OCI-LY7 (cell line): ENCODE measurements at regions of chr3 and their contacts with region 1.

Region 1: DNA sequence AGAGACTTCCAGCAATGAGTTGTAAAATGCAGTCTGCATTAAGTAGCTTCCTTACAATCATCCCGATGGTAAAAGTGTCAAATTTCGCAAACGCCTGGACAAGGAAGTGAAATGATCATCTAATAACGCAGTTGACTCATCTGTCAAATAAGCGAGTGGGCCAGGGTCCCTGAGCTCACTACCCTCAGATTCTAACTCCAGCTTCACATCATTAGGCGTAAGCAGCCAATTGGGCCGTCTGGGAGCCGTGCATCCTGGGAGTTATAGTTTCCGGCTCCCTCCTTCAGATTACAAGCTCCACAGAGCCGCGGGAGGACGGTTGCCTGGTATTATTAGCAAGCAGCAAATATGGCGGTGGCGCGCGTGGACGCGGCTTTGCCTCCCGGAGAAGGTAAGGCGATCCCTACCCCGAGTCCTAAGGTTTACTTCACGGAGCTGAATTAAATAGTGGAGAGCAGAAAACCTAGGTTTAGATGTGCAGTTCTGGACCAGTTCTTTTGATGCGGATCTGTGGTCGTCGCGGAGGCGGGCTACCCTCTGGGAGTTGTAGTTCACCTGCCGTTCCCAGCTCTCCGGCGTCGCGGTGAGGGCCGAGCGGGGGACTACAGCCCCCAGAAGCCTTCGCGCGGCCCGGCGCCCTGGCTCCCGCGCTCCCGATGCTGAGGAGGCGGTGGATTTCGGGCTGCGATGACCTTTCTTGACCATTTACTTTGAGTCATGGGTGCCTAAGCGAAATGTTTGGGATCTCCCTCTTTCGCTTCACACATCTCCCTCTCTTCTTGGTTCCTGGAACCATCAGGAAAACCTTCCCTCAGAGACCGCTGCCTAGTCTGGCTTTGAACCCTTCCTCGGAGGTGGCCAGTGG is at the start of gene CEP97:
- DNase-seq: peak; percentile 96
- H3K4me3 ChIP-seq: peak within 1 kb of the TSS; percentile 87
- H3K27ac ChIP-seq: peak within 1 kb of the TSS; percentile 83
- H3K4me1 ChIP-seq: peaks cover 47% of the 10 kb centered on the region
- CTCF ChIP-seq: no peak
- total RNA-seq, gene CEP97: 25.3 and 27.3 TPM in 2 replicates

Region 2: GRCh38 chr3:101625879-101626278 is 98.7 kb before region 1 on chr3:
- CTCF ChIA-PET with region 1: no interaction called
- POLR2A ChIA-PET with region 1: no interaction called
- intact Hi-C with region 1: no loop called
- DNase-seq: no peak
- H3K4me3 ChIP-seq: no peak overlapping the region
- H3K27ac ChIP-seq: no peak overlapping the region
- H3K4me1 ChIP-seq: no peaks in the 10 kb centered on the region
- CTCF ChIP-seq: no peak

Region 3: DNA sequence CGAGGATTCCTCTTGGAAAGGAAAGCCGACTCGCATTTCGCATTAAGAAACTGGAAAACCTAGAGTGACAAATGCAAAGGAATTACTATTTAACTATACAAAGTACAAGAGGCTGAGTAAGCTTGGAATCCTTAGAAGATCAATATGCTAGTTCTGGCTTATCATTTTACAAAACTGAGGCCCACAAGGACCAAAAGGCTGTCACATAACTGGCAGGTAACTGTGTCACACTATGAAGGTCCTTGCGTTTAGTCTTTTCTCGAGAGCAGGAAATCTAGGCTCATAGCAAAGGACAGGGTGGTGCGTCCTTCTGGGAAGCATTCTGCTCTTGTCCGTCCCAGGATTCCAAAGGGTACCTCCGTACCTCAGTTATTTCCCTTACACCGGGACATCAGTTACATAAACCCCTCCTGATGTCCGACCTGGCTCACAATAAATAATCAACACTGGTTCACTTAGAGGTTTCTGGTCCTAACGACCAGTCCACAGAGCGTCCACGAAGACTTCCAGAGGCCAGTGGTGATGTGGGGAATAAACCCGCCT is 38.6 kb before region 1 on chr3:
- CTCF ChIA-PET with region 1: no interaction called
- POLR2A ChIA-PET with region 1: interaction called, 12 read pairs
- intact Hi-C with region 1: loop called (anchors 5 kb)
- DNase-seq: no peak
- H3K4me3 ChIP-seq: peak overlapping the region; percentile 97
- H3K27ac ChIP-seq: peak overlapping the region; percentile 63
- H3K4me1 ChIP-seq: peaks cover 34% of the 10 kb centered on the region
- CTCF ChIP-seq: no peak

Region 4: GRCh38 chr3:101701696-101702634 is 22.6 kb before region 1 on chr3:
- CTCF ChIA-PET with region 1: interaction called, 4 read pairs
- POLR2A ChIA-PET with region 1: interaction called, 67 read pairs
- intact Hi-C with region 1: loop called (anchors 1 kb)
- DNase-seq: peak; percentile 45
- H3K4me3 ChIP-seq: peak overlapping the region; percentile 13
- H3K27ac ChIP-seq: peak overlapping the region; percentile 72
- H3K4me1 ChIP-seq: peaks cover 27% of the 10 kb centered on the region
- CTCF ChIP-seq: no peak

Region 5: GRCh38 chr3:101709126-101709525 is 15.4 kb before region 1 on chr3:
- CTCF ChIA-PET with region 1: no interaction called
- POLR2A ChIA-PET with region 1: interaction called, 67 read pairs
- intact Hi-C with region 1: no loop called
- DNase-seq: no peak
- H3K4me3 ChIP-seq: no peak overlapping the region
- H3K27ac ChIP-seq: no peak overlapping the region
- H3K4me1 ChIP-seq: peaks cover 20% of the 10 kb centered on the region
- CTCF ChIP-seq: no peak

Region 6: GRCh38 chr3:101779047-101779821 is 54.7 kb after region 1 on chr3 and contains the start of gene NXPE3:
- CTCF ChIA-PET with region 1: no interaction called
- POLR2A ChIA-PET with region 1: interaction called, 12 read pairs
- intact Hi-C with region 1: loop called (anchors 1 kb)
- DNase-seq: peak; percentile 92
- H3K4me3 ChIP-seq: peak within 1 kb of the TSS; percentile 77
- H3K27ac ChIP-seq: peak within 1 kb of the TSS; percentile 87
- H3K4me1 ChIP-seq: peaks cover 62% of the 10 kb centered on the region
- CTCF ChIP-seq: no peak
- total RNA-seq, gene NXPE3: 16.7 and 17.9 TPM in 2 replicates

Region 7: DNA sequence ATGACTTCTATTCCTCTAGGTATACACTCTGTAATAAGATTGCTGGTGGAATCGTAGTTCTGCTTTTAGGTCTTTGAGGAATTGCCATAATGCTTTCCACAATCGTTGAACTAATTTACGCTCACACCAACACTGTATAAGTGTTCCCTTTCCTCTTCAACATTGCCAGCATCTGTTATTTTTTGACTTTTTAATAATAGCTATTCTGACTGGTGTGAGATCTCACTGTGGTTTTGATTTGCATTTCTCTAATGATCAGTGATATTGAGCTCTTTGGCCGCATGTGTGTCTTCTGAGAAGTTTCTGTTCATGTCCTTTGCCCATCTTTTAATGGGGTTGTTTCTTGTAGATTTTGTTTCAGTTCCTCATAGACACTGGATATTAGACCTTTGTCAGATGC is 67.2 kb after region 1 on chr3:
- CTCF ChIA-PET with region 1: interaction called, 4 read pairs
- POLR2A ChIA-PET with region 1: interaction called, 5 read pairs
- intact Hi-C with region 1: loop called (anchors 2 kb)
- DNase-seq: peak; percentile 79
- H3K4me3 ChIP-seq: peak overlapping the region; percentile 49
- H3K27ac ChIP-seq: peak overlapping the region; percentile 93
- H3K4me1 ChIP-seq: peaks cover 54% of the 10 kb centered on the region
- CTCF ChIP-seq: no peak